Ascending aorta (tissue), 2 donors: ENCODE measurements at regions of chr1 and their contacts with region 1.

Region 1: DNA sequence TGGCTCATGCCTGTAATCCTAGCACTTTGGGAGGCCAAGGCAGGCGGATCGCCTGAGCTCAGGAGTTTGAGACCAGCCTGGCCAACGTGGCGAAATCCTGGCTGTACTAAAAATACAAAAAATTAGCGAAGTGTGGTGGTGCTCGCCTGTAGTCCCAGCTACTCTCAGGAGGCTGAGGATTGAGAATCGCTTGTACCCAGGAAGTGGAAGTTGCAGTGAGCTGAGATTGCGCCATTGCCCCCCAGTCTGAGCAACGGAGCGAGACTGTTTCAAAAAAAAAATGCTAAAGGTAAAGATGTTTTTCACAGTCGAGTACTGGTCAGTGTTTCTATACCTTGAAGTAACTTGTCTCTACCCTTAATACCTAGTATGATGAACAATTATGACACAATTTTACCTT is 11.1 kb downstream of the GLRX2 start:
- DNase-seq: no peak
- H3K4me3 ChIP-seq: no peak overlapping the region
- H3K27ac ChIP-seq: no peak overlapping the region
- H3K4me1 ChIP-seq: no peaks in the 10 kb centered on the region
- H3K27me3 ChIP-seq: no peaks in the 10 kb centered on the region
- CTCF ChIP-seq: no peak

Region 2: DNA sequence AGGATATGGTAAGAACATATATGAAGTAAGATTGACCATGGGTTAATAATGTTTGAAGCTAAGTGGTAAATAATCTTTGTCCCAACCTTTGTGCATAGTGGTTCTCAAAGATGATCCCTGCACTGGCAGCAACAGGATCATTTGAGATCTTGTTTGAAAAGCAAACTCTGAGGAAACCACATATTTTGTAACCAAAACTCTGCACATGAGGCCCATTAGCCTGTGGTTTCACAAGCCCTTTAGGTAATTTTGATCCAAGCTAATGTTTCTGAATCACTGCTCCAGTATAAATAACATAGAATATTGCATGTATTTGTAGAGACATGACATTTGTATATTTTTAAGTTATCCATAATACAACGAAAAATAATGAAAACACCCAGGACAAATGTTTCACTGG is 1083.7 kb before region 1 on chr1:
- intact Hi-C with region 1: no loop called
- DNase-seq: no peak
- H3K4me3 ChIP-seq: no peak overlapping the region
- H3K27ac ChIP-seq: no peak overlapping the region
- H3K4me1 ChIP-seq: no peaks in the 10 kb centered on the region
- H3K27me3 ChIP-seq: no peaks in the 10 kb centered on the region
- CTCF ChIP-seq: no peak

Region 3: GRCh38 chr1:193143285-193143684 is 49.2 kb after region 1 on chr1:
- intact Hi-C with region 1: loop called (anchors 5 kb)
- DNase-seq: no peak
- H3K4me3 ChIP-seq: no peak overlapping the region
- H3K27ac ChIP-seq: no peak overlapping the region
- H3K4me1 ChIP-seq: peaks cover 0 to 2% of the 10 kb centered on the region in 2 donors
- H3K27me3 ChIP-seq: no peaks in the 10 kb centered on the region
- CTCF ChIP-seq: peak in 1 of 3 experiments; percentile 48